AG04449 (cell line): ENCODE measurements at regions of chr16 and their contacts with region 1.

Region 1: GRCh38 chr16:10256784-10257641 is 74.8 kb upstream of the GRIN2A start:
- DNase-seq: no peak
- H3K4me3 ChIP-seq: no peak overlapping the region
- CTCF ChIP-seq: peak; percentile 91

Region 2: GRCh38 chr16:10242916-10243315 is 14.1 kb before region 1 on chr16:
- CTCF ChIA-PET with region 1: interaction called, 13 read pairs
- POLR2A ChIA-PET with region 1: interaction called, 3 read pairs
- DNase-seq: no peak
- H3K4me3 ChIP-seq: no peak overlapping the region
- CTCF ChIP-seq: no peak